HCT116 (cell line): ENCODE measurements at regions of chr10 and their contacts with region 1.

Region 1: GRCh38 chr10:37976091-37976879 is at the start of gene ZNF25:
- DNase-seq: peak; percentile 99
- ATAC-seq: peak; percentile 95
- H3K4me3 ChIP-seq: peak within 1 kb of the TSS; percentile 68 to 81
- H3K27ac ChIP-seq: peak within 1 kb of the TSS; percentile 79
- H3K4me1 ChIP-seq: peaks cover 0 to 14% of the 10 kb centered on the region in 2 experiments; a peak in 2 of 4 replicates
- H3K27me3 ChIP-seq: no peaks in the 10 kb centered on the region
- CTCF ChIP-seq: peak; percentile 67 to 94 (median 90)
- POLR2A ChIP-seq: peak; percentile 54
- RAD21 ChIP-seq: peak; percentile 70
- total RNA-seq, gene ZNF25: 4.6 TPM

Region 2: DNA sequence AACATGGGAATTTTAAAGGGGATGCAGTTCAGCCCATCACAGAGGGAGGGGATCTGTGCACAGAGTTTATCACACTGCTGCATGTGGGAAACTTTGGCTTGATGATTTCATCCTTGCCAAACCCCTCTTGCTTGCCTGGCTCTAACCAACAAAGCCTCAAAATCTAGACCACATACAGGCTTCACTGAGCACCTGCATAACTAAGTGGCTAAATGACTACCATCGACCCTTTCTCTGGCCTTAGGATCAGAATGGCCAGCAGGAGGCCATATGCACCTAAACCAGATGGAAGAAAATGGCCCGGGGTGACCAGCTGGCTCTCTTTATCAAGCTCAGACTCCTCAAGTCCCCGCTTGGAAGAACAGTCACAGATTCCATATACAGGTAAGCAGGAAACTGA is 15.8 kb after region 1 on chr10:
- CTCF ChIA-PET with region 1: interaction called, 14 read pairs
- POLR2A ChIA-PET with region 1: interaction called, 4 read pairs
- RAD21 ChIA-PET with region 1: no interaction called
- intact Hi-C with region 1: no loop called
- DNase-seq: no peak
- ATAC-seq: no peak
- H3K4me3 ChIP-seq: no peak overlapping the region
- H3K27ac ChIP-seq: no peak overlapping the region
- H3K4me1 ChIP-seq: no peaks in the 10 kb centered on the region
- H3K27me3 ChIP-seq: no peaks in the 10 kb centered on the region
- CTCF ChIP-seq: peak in 2 of 3 experiments; percentile 13 to 28; a peak in 1 of 6 replicates
- POLR2A ChIP-seq: no peak
- RAD21 ChIP-seq: 0 out of 2 replicates have a peak, but pooled peaks have one; percentile 15

Region 3: DNA sequence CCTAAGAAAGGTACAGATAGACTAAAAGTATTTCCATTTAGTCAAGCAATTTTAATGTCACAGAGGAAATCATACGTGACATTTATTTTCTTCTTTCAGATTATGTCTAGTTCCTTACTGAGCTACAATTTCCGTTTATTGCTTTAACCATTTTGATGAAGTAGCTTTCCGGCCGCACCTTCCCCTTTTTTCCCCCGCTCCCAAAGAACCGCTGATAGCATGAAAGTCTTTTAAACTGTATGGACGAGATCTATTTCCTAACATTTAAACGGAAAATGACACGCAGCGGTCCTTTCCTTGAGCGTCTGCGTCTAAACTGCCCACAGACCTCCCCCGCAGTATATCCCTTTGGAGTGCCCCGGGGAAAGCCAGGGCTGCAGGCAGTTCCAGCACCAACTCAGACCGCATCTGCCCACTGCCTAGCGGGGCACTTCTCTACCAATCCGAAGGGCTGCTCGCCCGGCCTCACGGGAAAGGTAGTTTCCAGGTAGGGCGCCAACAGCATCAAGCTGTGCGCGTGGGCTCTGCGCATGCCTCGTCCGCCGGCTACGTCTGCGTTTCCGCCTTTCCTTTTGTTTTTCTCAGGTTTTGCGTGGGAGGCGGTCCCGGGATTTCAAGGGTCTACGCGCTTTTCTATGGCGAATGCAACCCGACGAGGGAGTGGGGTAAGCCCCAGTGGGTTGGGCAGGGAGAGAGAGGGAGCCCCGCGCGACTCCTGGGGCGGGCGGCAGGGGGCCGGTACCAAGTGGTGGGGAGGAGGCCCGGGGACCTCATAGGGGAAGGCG is 34.0 kb after region 1 on chr10 and contains the start of gene ZNF33A:
- CTCF ChIA-PET with region 1: interaction called, 5 read pairs
- POLR2A ChIA-PET with region 1: interaction called, 4 read pairs
- RAD21 ChIA-PET with region 1: no interaction called
- intact Hi-C with region 1: loop called (anchors 1 kb)
- DNase-seq: peak; percentile 91
- ATAC-seq: peak; percentile 92
- H3K4me3 ChIP-seq: peak within 1 kb of the TSS; percentile 58 to 76
- H3K27ac ChIP-seq: peak within 1 kb of the TSS; percentile 81
- H3K4me1 ChIP-seq: peaks cover 0 to 16% of the 10 kb centered on the region in 2 experiments; a peak in 2 of 4 replicates
- H3K27me3 ChIP-seq: no peaks in the 10 kb centered on the region
- CTCF ChIP-seq: no peak
- POLR2A ChIP-seq: peak; percentile 86
- RAD21 ChIP-seq: no peak
- total RNA-seq, gene ZNF33A: 21.2 TPM

Region 4: DNA sequence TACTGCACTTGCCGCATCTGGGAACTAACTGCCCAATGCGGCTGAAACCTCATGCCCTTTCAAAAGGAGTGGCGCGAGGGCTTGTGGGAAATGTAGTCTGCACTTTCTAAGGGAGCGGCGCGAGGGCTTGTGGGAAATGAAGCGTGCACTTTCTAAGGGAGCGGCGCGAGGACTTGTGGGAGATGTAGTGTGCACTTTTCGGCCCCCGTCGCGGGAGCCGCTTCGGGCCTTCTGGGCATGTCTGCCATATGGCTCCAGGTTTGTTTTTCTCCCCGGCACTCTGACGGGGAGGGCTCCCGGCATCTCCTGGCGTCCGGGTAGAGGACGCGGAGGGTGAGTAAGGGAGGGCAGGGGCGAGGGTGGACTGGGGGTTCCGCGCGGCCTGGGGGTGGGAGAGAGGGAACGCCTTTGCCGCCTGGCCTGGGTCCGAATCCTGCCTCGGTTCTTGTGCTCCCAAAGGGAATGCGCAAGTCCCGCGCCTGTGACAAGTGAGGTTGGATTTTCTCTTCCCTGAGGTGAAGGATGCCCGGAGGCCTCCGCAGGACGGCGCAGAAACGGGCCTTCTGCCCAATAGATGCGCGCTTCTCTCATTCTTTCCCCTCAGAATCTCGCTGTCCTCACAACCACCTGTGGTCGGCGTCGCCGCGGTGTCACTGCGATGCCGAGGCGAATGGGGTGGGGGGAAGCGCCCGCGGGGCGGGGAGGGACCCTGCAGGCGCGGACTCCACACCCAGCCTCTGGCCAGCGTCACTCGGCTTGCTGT is 118.1 kb after region 1 on chr10 and contains the start of gene ZNF37A:
- CTCF ChIA-PET with region 1: no interaction called
- POLR2A ChIA-PET with region 1: no interaction called
- RAD21 ChIA-PET with region 1: interaction called in 1 of 2 experiments, 3 read pairs
- intact Hi-C with region 1: loop called (anchors 1 kb)
- DNase-seq: peak; percentile 95
- ATAC-seq: peak; percentile 96
- H3K4me3 ChIP-seq: peak within 1 kb of the TSS; percentile 83 to 88
- H3K27ac ChIP-seq: peak within 1 kb of the TSS; percentile 62; the same call in 1 of the 2 replicates
- H3K4me1 ChIP-seq: peaks cover 0 to 14% of the 10 kb centered on the region in 2 experiments; a peak in 2 of 4 replicates
- H3K27me3 ChIP-seq: no peaks in the 10 kb centered on the region
- CTCF ChIP-seq: no peak
- POLR2A ChIP-seq: peak; percentile 33
- RAD21 ChIP-seq: no peak
- total RNA-seq, gene ZNF37A: 18.5 TPM